ENCODE measurements at regions of chr19 and their contacts with region 1.

Region 1: GRCh38 chr19:45478454-45479238 is 10.8 kb downstream of the FOSB start:
- DNase-seq: peak; percentile 94
- ATAC-seq: peak; percentile 59
- H3K4me3 Mint-ChIP-seq: peak overlapping the region; percentile 53
- H3K27ac Mint-ChIP-seq: peak overlapping the region; percentile 96
- H3K4me1 Mint-ChIP-seq: peaks cover 34% of the 10 kb centered on the region
- H3K27me3 Mint-ChIP-seq: peaks cover 17% of the 10 kb centered on the region

Region 2: DNA sequence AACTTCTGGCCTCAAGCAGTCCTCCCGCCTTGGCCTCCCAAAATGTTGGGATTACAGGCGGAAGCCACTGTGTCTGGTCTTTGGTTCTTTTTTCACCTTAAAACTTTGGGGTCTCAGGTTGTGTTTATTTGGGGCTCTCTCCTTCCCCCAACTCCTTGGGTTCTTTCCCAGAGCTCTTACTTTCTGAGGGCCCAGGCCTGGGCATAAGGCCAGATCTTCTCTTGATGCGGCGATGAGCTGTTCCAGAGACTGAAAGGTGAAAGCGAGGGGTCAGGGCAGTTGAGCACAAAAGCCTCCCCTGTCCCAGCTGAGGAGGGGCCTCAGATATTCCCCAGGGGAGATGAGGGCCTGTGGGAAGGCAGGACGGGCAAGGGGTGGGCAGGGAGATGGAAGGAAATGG is 65.1 kb before region 1 on chr19:
- CTCF ChIA-PET with region 1: interaction called, 10 read pairs
- POLR2A ChIA-PET with region 1: no interaction called
- DNase-seq: no peak
- ATAC-seq: no peak
- H3K4me3 Mint-ChIP-seq: no peak overlapping the region
- H3K27ac Mint-ChIP-seq: no peak overlapping the region
- H3K4me1 Mint-ChIP-seq: peaks cover 11% of the 10 kb centered on the region
- H3K27me3 Mint-ChIP-seq: no peaks in the 10 kb centered on the region

Region 3: GRCh38 chr19:45439569-45440254 is 38.9 kb before region 1 on chr19:
- CTCF ChIA-PET with region 1: interaction called, 455 read pairs
- POLR2A ChIA-PET with region 1: interaction called, 35 read pairs
- DNase-seq: peak; percentile 92
- ATAC-seq: peak; percentile 72
- H3K4me3 Mint-ChIP-seq: peak overlapping the region; percentile 62
- H3K27ac Mint-ChIP-seq: peak overlapping the region; percentile 83
- H3K4me1 Mint-ChIP-seq: peaks cover 37% of the 10 kb centered on the region
- H3K27me3 Mint-ChIP-seq: peaks cover 2% of the 10 kb centered on the region

Region 4: DNA sequence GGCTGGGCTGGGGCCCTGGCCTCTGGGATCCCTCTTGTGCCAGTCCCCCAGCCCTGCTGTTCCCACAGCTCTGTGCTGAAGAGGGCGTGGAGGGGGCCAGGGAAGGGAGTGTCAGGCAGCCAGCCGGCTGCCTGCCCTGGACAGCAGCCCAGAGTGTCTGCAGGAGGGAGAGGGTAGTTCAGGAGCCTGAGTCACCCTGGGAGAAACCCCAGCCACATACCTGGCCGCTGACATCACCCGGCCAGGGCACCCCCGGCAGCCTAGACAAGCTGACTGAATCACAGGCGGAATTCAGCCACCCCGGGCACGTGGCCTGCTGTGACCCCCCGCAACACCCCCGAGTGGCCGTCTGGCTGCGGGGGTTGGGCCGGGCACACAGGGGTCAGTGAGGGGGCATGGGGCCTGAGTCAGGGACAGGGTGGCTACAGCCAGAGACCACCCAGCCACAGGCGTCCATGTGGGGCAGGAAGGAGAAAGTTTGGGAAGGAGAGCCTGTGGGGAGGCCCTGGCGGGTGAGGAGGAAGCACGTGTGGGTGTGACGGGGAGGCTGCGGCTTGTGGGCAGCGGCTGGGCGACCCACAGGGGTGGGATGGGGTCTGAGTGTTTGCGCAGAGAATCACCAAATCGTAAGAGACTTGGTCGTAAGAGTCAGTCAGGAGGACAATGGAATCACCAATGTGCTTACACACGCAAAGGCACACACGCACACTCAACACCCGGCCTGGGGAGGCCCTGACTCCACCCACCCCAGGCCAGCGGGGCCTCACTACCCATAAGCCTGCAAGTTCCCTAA is 22.7 kb before region 1 on chr19:
- CTCF ChIA-PET with region 1: interaction called, 16 read pairs
- POLR2A ChIA-PET with region 1: interaction called, 5 read pairs
- DNase-seq: peak; percentile 58
- ATAC-seq: peak; percentile 48
- H3K4me3 Mint-ChIP-seq: peak overlapping the region; percentile 12
- H3K27ac Mint-ChIP-seq: no peak overlapping the region
- H3K4me1 Mint-ChIP-seq: peaks cover 34% of the 10 kb centered on the region
- H3K27me3 Mint-ChIP-seq: peaks cover 12% of the 10 kb centered on the region

Region 5: GRCh38 chr19:45496349-45496953 is 17.8 kb after region 1 on chr19:
- CTCF ChIA-PET with region 1: interaction called, 19 read pairs
- POLR2A ChIA-PET with region 1: no interaction called
- DNase-seq: peak; percentile 66
- ATAC-seq: peak; percentile 10
- H3K4me3 Mint-ChIP-seq: peak overlapping the region; percentile 5
- H3K27ac Mint-ChIP-seq: no peak overlapping the region
- H3K4me1 Mint-ChIP-seq: peaks cover 37% of the 10 kb centered on the region
- H3K27me3 Mint-ChIP-seq: peaks cover 15% of the 10 kb centered on the region

Region 6: GRCh38 chr19:45547976-45548609 is 69.4 kb after region 1 on chr19:
- CTCF ChIA-PET with region 1: no interaction called
- POLR2A ChIA-PET with region 1: no interaction called
- DNase-seq: no peak
- ATAC-seq: no peak
- H3K4me3 Mint-ChIP-seq: no peak overlapping the region
- H3K27ac Mint-ChIP-seq: no peak overlapping the region
- H3K4me1 Mint-ChIP-seq: peaks cover 2% of the 10 kb centered on the region
- H3K27me3 Mint-ChIP-seq: no peaks in the 10 kb centered on the region

Region 7: GRCh38 chr19:45558399-45558878 is 79.8 kb after region 1 on chr19:
- CTCF ChIA-PET with region 1: interaction called, 19 read pairs
- POLR2A ChIA-PET with region 1: no interaction called
- DNase-seq: peak; percentile 82
- ATAC-seq: peak; percentile 98
- H3K4me3 Mint-ChIP-seq: no peak overlapping the region
- H3K27ac Mint-ChIP-seq: peak overlapping the region; percentile 62
- H3K4me1 Mint-ChIP-seq: peaks cover 28% of the 10 kb centered on the region
- H3K27me3 Mint-ChIP-seq: no peaks in the 10 kb centered on the region